Cardiac septum (tissue), 1 donor: ENCODE measurements at regions of chr18 and their contacts with region 1.

Region 1: GRCh38 chr18:28743115-28743514 is 566.2 kb upstream of the CDH2 start:
- DNase-seq: no peak

Region 2: GRCh38 chr18:28684746-28685355 is 58.3 kb before region 1 on chr18:
- intact Hi-C with region 1: loop called (anchors 10 kb)
- DNase-seq: no peak